Mammary epithelial cell (primary cell): ENCODE measurements at regions of chr1 and their contacts with region 1.

Region 1: DNA sequence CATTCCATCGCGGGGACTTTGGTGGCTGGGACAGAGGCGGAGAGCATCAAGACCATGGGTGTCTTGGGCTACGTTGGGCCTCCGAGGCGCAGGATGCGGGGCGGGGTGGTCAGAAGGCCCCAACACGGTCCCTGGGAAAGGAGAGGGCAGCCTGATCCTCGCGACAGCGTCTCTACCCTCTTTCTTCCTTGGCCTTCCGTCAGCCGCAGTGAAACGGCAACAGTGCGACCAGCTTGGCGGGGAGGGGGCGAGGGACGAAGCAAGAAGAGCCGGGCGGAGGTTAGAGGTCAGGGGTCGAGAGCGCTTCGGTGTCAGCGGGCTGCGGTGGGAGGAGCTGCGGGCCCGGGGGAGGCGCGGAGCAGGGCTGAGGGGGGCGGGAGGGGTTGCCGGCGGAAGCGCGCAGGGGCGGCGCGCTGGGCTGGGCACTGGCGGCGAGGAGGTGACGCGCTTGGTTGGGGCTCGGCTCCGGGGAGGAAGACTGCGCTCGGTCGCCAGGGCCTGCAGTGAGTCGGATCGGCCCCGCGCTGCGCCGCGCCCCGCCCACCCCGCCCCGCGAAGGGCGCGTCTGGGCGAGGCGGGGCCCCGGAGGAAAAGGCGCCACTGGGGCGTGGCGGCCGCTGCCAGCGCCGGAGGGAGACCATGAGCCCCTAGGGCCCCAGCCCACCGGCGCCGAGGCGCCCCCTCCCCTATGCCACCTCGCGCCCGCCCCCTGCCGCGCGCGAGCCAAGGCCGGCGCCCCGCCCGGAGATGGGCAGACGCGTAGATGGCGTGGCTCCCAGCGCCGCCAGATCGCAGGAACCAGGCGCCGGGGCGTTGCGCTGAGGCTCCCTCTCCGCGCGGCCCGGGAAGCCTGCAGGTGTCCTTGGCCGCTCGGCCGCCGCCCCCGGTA is at the start of gene KCNC4:
- DNase-seq: peak; percentile 61
- H3K4me3 ChIP-seq: peak within 1 kb of the TSS; percentile 50 to 56 (median 51)
- H3K27ac ChIP-seq: no peak within 1 kb of the TSS
- H3K4me1 ChIP-seq: peaks cover 18% of the 10 kb centered on the region
- H3K27me3 ChIP-seq: no peaks in the 10 kb centered on the region
- CTCF ChIP-seq: no peak
- total RNA-seq, gene KCNC4: 5.3 to 6.7 TPM

Region 2: DNA sequence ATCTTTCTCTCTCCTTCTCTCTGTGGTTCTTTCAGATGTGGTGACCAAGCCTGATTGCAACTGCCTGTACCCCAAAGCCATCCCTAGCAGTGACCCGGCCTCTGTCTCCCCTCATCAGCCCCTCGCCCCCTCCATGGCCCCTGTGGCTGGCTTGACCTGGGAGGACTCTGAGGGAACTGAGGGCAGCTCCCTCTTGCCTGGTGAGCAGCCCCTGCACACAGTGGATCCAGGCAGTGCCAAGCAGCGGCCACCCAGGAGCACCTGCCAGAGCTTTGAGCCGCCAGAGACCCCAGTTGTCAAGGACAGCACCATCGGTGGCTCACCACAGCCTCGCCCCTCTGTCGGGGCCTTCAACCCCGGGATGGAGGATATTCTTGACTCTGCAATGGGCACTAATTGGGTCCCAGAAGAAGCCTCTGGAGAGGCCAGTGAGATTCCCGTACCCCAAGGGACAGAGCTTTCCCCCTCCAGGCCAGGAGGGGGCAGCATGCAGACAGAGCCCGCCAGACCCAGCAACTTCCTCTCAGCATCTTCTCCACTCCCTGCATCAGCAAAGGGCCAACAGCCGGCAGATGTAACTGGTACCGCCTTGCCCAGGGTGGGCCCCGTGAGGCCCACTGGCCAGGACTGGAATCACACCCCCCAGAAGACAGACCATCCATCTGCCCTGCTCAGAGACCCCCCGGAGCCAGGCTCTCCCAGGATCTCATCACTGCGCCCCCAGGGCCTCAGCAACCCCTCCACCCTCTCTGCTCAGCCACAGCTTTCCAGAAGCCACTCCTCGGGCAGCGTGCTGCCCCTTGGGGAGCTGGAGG is 286.6 kb before region 1 on chr1:
- CTCF ChIA-PET with region 1: no interaction called
- dilution Hi-C with region 1: no loop called
- in situ Hi-C with region 1: no loop called
- intact Hi-C with region 1: no loop called
- DNase-seq: no peak
- H3K4me3 ChIP-seq: no peak overlapping the region
- H3K27ac ChIP-seq: no peak overlapping the region
- H3K4me1 ChIP-seq: peaks cover 27% of the 10 kb centered on the region
- H3K27me3 ChIP-seq: no peaks in the 10 kb centered on the region
- CTCF ChIP-seq: peak; percentile 37

Region 3: GRCh38 chr1:110229348-110230001 is 19.5 kb after region 1 on chr1:
- CTCF ChIA-PET with region 1: no interaction called
- dilution Hi-C with region 1: no loop called
- in situ Hi-C with region 1: no loop called
- intact Hi-C with region 1: loop called (anchors 2 kb)
- DNase-seq: peak; percentile 84
- H3K4me3 ChIP-seq: no peak overlapping the region
- H3K27ac ChIP-seq: peak overlapping the region; percentile 34
- H3K4me1 ChIP-seq: peaks cover 44% of the 10 kb centered on the region
- H3K27me3 ChIP-seq: no peaks in the 10 kb centered on the region
- CTCF ChIP-seq: no peak

Region 4: GRCh38 chr1:110262846-110263631 is 53.1 kb after region 1 on chr1:
- CTCF ChIA-PET with region 1: no interaction called
- dilution Hi-C with region 1: no loop called
- in situ Hi-C with region 1: no loop called
- intact Hi-C with region 1: loop called (anchors 2 kb)
- DNase-seq: no peak
- H3K4me3 ChIP-seq: no peak overlapping the region
- H3K27ac ChIP-seq: no peak overlapping the region
- H3K4me1 ChIP-seq: peaks cover 20% of the 10 kb centered on the region
- H3K27me3 ChIP-seq: no peaks in the 10 kb centered on the region
- CTCF ChIP-seq: no peak

Region 5: DNA sequence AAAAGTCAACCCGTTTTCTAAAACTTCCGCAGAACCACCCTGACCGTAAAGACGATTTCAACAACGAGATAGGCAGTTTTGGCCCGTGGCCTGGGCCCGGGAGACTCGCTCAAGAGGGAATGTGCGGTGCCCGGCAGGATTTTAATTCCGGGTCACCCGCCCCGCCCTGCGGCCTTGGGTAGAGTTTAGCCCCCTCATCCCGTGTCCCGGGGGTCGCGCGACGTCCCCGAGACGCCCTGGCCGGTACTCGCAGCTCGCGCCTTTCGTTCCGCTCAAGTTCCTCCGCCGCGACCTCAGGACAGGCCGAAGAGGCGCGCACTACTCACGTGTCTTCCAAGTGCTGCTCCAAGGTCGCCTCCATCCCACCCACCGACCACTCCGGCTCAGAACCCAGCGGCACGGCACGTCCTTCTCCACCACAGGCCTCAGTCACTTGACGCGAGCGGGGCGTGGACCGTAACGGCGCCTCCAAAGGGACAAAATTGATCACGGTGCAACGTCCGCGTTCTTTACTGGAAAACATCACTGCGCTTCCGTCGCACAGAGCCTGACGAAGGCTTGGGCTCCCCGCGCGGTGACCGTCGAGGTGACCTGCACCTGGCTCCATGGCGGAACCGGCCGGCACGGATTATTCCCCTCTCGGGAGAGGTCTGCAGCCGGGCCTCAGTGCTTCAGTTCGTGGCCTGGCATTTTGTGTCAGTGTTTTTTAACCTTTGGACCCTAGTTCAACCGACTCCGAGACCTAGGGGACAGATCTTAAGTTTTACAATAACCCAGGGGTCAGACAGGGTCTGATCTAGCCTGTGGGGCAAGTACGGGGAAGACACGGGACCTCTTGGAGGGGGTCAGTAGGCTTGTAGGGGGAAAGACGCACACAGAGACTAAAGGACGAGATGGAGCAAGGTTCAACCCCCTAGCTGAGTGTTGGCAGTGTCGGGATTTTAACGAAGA is 197.6 kb after region 1 on chr1 and contains the start of gene LAMTOR5:
- CTCF ChIA-PET with region 1: no interaction called
- dilution Hi-C with region 1: no loop called
- in situ Hi-C with region 1: loop called in 1 of 2 experiments (anchors 10 kb)
- intact Hi-C with region 1: no loop called
- DNase-seq: peak; percentile 89
- H3K4me3 ChIP-seq: peak within 1 kb of the TSS; percentile 93 to 99 (median 98)
- H3K27ac ChIP-seq: peak within 1 kb of the TSS; percentile 88
- H3K4me1 ChIP-seq: peaks cover 3% of the 10 kb centered on the region
- H3K27me3 ChIP-seq: no peaks in the 10 kb centered on the region
- CTCF ChIP-seq: peak in 1 of 2 donors; percentile 20
- total RNA-seq, gene LAMTOR5: 75.5 to 106 TPM

Region 6: GRCh38 chr1:110513511-110513910 is 303.6 kb after region 1 on chr1:
- CTCF ChIA-PET with region 1: no interaction called
- dilution Hi-C with region 1: loop called (anchors 10 kb)
- in situ Hi-C with region 1: no loop called
- intact Hi-C with region 1: no loop called
- DNase-seq: no peak
- H3K4me3 ChIP-seq: no peak overlapping the region
- H3K27ac ChIP-seq: no peak overlapping the region
- H3K4me1 ChIP-seq: no peaks in the 10 kb centered on the region
- H3K27me3 ChIP-seq: no peaks in the 10 kb centered on the region
- CTCF ChIP-seq: no peak